AG04449 (cell line): ENCODE measurements at regions of chr1 and their contacts with region 1.

Region 1: DNA sequence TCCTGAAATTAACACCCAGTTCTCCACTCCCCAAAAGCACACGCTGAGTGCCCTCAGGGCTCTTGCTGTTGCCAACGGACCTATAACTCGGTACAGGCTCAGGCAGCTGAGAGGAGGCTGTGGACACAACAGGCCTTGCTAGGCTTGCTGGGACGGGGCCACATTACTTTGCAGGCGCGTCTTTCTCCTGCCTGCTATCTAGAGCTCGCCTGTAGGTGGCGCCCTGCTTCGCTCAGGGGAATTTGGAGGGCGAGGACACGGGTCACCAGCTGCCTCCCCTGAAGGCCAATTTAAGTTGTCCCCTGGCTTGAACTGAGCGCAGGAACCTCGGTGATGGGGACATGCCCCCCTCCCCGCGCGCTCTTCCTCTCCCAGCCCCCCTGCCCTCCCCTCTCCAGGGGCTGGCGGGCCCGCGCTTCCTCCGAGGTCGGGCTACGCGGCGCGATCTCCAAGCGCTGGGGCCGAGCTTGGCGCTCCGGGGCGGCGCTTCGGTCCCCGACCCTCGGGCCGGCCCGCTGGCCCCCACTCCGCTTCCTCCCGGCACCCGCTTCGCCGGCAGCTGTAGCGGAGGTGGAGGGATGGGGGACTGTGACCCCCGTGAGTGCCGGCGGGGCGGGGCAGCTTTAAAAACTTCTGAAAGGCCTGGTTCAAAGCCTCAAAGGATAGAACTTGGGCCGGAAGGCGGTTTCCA is 32.4 kb upstream of the NFIA start:
- DNase-seq: no peak
- H3K4me3 ChIP-seq: peak overlapping the region; percentile 65
- CTCF ChIP-seq: peak; percentile 95

Region 2: DNA sequence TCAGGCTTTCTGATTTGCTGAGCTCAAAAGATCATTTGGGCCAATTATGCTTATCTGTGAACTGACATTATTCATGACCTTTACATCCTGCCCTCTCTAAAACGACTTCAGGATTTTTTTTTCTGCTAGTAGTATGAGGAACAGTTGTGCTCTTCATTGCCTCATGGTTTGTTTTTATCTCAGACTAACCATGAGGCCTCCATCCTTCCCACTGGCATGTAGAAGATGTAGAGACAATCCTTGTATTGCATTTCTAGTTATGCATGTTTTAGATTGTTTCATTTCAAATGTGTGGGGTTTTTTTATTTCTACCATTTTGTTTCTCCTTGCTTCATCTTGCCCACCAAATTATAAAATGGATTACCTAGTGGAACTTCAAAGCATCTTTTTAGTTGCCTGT is 893.6 kb before region 1 on chr1:
- CTCF ChIA-PET with region 1: interaction called, 14 read pairs
- POLR2A ChIA-PET with region 1: no interaction called
- DNase-seq: no peak
- H3K4me3 ChIP-seq: no peak overlapping the region
- CTCF ChIP-seq: no peak

Region 3: GRCh38 chr1:60950224-60951063 is 99.6 kb before region 1 on chr1:
- CTCF ChIA-PET with region 1: no interaction called
- POLR2A ChIA-PET with region 1: no interaction called
- DNase-seq: no peak
- H3K4me3 ChIP-seq: no peak overlapping the region
- CTCF ChIP-seq: no peak

Region 4: DNA sequence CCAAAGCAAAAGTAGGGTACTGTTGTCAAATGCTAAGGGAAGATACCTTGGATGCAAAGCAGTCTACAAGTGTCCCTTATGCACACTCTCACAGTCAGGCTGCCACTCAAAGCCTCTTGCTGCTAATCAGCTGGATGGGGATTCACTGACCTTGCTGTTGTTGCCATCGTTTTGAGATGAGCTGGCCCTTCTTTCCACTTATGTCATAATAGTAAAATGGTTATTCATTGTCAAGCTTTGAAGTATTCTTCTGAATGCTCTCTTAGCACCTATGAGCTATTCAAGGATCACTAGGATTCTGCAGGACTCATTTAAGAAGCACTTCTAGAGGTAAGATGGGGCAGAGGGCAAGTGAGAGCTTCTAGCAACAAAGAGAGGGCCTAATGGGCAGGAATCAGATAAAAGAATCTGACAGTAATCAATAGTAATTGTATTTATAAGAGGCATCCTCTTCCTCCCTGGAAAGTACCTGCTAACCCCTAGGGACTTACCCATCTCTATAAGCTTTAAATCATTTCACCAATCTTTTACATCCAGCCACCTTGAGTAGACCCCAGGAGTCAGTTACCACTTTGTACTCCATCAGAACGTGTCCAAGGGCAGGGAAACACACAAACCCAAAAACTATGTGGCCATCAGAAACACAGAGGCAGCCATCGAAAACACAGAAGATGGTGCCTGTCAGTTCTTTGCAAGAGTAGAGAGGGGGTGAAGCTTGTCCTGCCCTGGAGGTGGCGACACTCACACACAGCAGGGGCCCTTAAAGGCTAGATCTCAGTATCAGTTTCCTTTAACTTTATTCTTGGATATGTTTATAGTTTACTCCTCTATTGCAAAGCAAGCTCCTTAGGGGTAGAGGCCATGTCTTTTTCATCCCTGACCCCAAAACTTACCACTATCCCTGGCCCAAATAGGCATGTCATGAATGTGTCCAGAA is 71.3 kb before region 1 on chr1:
- CTCF ChIA-PET with region 1: interaction called, 329 read pairs
- POLR2A ChIA-PET with region 1: no interaction called
- DNase-seq: no peak
- H3K4me3 ChIP-seq: no peak overlapping the region
- CTCF ChIP-seq: peak; percentile 76

Region 5: GRCh38 chr1:61337981-61338848 is 288.2 kb after region 1 on chr1:
- CTCF ChIA-PET with region 1: interaction called, 23 read pairs
- POLR2A ChIA-PET with region 1: no interaction called
- DNase-seq: peak; percentile 33
- H3K4me3 ChIP-seq: no peak overlapping the region
- CTCF ChIP-seq: peak; percentile 63

Region 6: GRCh38 chr1:61453111-61453961 is 403.3 kb after region 1 on chr1:
- CTCF ChIA-PET with region 1: interaction called, 84 read pairs
- POLR2A ChIA-PET with region 1: no interaction called
- DNase-seq: peak; percentile 70
- H3K4me3 ChIP-seq: no peak overlapping the region
- CTCF ChIP-seq: peak; percentile 87

Region 7: DNA sequence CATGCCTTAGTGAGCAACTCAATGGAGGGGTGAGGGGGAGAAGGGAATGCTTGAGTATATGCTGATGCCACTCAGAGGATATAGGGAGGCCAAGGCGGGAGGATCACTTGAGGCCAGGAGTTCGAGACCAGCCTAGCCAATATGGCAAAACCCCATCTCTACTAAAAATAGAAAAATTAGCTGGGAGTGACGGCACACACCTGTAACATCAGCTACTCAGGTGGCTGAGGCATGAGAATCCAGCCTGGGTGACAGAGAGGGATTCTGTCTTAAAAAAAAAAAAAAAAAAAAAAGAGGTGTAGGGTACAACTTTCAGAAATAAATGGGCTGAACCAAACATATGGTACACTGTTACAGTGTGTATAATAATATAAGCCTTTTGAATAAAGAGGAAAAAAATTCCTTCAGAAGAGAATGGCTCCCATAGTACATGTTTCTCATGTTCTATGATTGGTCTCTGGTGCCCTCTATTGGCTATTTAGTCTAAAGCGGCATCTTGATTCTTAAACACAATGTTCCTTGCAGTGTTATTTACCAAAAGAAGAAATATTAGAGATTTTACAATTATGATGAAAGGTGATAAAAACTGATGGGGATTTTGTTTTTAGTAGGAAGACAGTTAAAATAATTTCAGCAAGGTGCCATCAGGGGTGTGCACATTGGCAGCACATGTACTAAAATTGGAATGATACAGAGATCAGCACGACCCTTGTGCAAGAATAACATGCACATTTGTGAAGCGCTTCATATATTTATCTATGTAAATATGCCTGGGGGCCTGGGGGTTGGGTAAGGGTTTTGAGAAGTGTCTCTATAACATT is 802.1 kb after region 1 on chr1:
- CTCF ChIA-PET with region 1: interaction called, 43 read pairs
- POLR2A ChIA-PET with region 1: no interaction called
- DNase-seq: peak; percentile 17
- H3K4me3 ChIP-seq: no peak overlapping the region
- CTCF ChIP-seq: peak; percentile 45